ENCODE measurements at regions of chr2 and their contacts with region 1.

Region 1: GRCh38 chr2:231780909-231781797 is at the start of gene PDE6D:
- DNase-seq: peak; percentile 91 to 97 (median 95)
- ATAC-seq: peak; percentile 89
- H3K4me3 ChIP-seq: peak within 1 kb of the TSS; percentile 90
- H3K4me3 Mint-ChIP-seq: peak within 1 kb of the TSS; percentile 94
- H3K27ac ChIP-seq: peak within 1 kb of the TSS; percentile 71 to 78
- H3K27ac Mint-ChIP-seq: peak within 1 kb of the TSS; percentile 94
- H3K4me1 ChIP-seq: peaks cover 36% of the 10 kb centered on the region
- H3K4me1 Mint-ChIP-seq: peaks cover 71% of the 10 kb centered on the region
- H3K27me3 ChIP-seq: no peaks in the 10 kb centered on the region
- H3K27me3 Mint-ChIP-seq: no peaks in the 10 kb centered on the region
- CTCF ChIP-seq: no peak
- total RNA-seq, gene PDE6D: 5.9 to 7.0 TPM

Region 2: DNA sequence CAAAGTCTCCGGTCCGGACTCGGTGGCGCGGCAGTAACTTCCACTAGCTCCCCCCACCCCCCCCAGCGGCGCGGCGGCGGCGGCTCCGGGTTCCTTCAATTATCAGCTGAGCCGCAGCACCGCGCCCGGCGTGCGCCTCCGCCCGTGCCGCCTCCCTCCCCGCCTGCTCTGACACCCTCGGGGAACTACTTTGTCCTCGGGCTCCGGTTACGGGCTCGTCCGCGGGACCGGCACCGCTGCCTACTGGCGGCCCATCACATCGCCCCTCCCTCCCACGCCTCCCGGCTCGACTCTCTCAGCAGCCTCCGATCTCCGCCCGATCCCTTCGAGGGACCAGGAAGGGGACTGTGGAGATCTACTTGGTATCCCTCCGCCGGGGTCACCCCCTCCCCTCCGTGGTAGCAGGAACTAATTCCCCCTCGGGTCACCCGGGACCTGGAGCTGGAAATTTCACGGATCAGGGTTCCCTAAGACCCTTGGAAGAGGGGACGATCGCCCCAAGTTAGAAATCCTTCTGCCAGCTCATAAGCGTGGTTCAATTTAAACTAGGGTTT is 1859.2 kb before region 1 on chr2 and contains the start of gene TRIP12:
- CTCF ChIA-PET with region 1: no interaction called
- POLR2A ChIA-PET with region 1: no interaction called
- intact Hi-C with region 1: loop called in 1 of 2 experiments (anchors 10 kb)
- DNase-seq: peak; percentile 77 to 95 (median 86)
- ATAC-seq: peak; percentile 74
- H3K4me3 ChIP-seq: peak within 1 kb of the TSS; percentile 85
- H3K4me3 Mint-ChIP-seq: peak within 1 kb of the TSS; percentile 98
- H3K27ac ChIP-seq: peak within 1 kb of the TSS; percentile 97 to 98
- H3K27ac Mint-ChIP-seq: peak within 1 kb of the TSS; percentile 95
- H3K4me1 ChIP-seq: peaks cover 28% of the 10 kb centered on the region
- H3K4me1 Mint-ChIP-seq: peaks cover 55% of the 10 kb centered on the region
- H3K27me3 ChIP-seq: no peaks in the 10 kb centered on the region
- H3K27me3 Mint-ChIP-seq: peaks cover 5% of the 10 kb centered on the region
- CTCF ChIP-seq: no peak
- total RNA-seq, gene TRIP12: 151 to 178 TPM

Region 3: GRCh38 chr2:231514103-231514950 is 266.8 kb before region 1 on chr2:
- CTCF ChIA-PET with region 1: no interaction called
- POLR2A ChIA-PET with region 1: no interaction called
- intact Hi-C with region 1: loop called in 1 of 2 experiments (anchors 2 kb)
- DNase-seq: peak; percentile 96 to 99 (median 98)
- ATAC-seq: peak; percentile 96
- H3K4me3 ChIP-seq: peak overlapping the region; percentile 78
- H3K4me3 Mint-ChIP-seq: peak overlapping the region; percentile 91
- H3K27ac ChIP-seq: peak overlapping the region; percentile 87 to 95
- H3K27ac Mint-ChIP-seq: peak overlapping the region; percentile 94
- H3K4me1 ChIP-seq: peaks cover 12% of the 10 kb centered on the region
- H3K4me1 Mint-ChIP-seq: peaks cover 24% of the 10 kb centered on the region
- H3K27me3 ChIP-seq: no peaks in the 10 kb centered on the region
- H3K27me3 Mint-ChIP-seq: no peaks in the 10 kb centered on the region
- CTCF ChIP-seq: no peak

Region 4: DNA sequence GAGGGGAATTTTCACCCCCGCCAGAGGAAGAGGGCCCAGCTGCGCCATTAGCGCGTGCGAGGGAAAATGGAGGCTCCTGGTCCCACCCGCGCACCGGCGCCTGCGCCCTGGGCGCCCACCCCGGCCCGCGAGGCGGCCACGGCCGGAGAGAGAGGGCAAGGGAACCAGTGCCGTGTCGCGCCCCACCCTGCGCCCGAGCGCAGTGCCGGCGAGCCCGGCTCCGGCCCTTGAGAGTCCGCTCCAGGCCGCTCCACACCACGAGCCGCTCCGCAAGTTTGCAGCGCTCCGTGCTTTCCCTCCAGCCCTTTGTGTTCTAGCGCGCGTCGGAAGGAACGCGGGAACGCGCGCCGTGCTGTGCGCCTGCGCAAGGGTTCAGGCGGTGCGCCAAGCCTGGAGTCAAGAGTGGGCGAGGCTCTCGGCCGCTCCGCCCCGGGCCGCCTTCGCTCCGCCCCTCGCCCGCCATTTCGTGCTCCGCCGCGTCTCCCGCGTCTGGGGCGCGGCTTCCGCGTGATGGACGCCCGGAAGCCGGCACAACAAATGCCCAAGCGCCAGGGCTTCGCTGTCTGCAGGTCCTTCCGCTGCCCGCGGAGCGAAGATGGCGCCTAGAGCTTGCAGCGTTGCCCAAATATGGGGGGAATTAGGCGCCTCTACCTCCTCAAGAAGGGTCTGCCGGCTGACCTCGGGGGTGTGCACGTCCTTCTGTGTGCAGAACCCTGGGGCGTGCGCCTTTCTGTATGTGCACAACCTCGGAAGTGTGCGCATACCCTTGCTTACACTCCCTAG is 118.9 kb before region 1 on chr2:
- CTCF ChIA-PET with region 1: no interaction called
- POLR2A ChIA-PET with region 1: interaction called, 4 read pairs
- intact Hi-C with region 1: loop called (anchors 2 to 5 kb)
- DNase-seq: peak; percentile 92 to 99 (median 97)
- ATAC-seq: peak; percentile 89
- H3K4me3 ChIP-seq: peak overlapping the region; percentile 57
- H3K4me3 Mint-ChIP-seq: peak overlapping the region; percentile 73
- H3K27ac ChIP-seq: peak overlapping the region; percentile 80 to 96
- H3K27ac Mint-ChIP-seq: peak overlapping the region; percentile 94
- H3K4me1 ChIP-seq: peaks cover 35% of the 10 kb centered on the region
- H3K4me1 Mint-ChIP-seq: peaks cover 17% of the 10 kb centered on the region
- H3K27me3 ChIP-seq: no peaks in the 10 kb centered on the region
- H3K27me3 Mint-ChIP-seq: no peaks in the 10 kb centered on the region
- CTCF ChIP-seq: no peak

Region 5: DNA sequence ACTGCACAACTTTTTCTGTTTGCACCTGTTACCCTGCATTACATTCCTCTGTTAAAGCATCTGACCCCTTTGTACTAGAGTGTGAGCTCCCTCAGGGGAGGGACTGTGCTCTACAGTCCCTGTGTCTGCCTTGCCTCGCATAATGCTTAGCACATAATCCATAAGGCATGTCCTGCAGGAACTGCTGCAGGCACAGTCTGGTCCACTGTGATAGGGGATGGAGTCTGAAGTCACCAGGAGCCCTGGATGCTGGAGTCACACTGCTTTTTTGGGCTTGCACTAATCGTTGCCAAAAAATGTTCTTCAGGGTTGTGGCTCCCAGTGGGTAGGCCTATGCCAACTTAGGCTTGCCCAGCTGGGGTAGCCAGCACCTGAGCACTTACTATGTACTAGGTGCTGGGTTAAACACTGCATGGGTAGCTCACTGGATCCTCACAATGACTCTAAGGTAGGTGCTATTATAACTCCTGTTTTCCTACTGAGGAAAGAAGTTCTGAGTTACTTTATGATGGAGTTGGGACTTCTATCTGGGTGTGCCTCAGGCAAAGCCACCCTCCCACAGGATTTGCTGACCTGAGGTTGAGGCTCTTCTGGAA is 38.4 kb after region 1 on chr2:
- CTCF ChIA-PET with region 1: no interaction called
- POLR2A ChIA-PET with region 1: no interaction called
- intact Hi-C with region 1: no loop called
- DNase-seq: no peak
- ATAC-seq: no peak
- H3K4me3 ChIP-seq: no peak overlapping the region
- H3K4me3 Mint-ChIP-seq: no peak overlapping the region
- H3K27ac ChIP-seq: no peak overlapping the region
- H3K27ac Mint-ChIP-seq: no peak overlapping the region
- H3K4me1 ChIP-seq: no peaks in the 10 kb centered on the region
- H3K4me1 Mint-ChIP-seq: no peaks in the 10 kb centered on the region
- H3K27me3 ChIP-seq: no peaks in the 10 kb centered on the region
- H3K27me3 Mint-ChIP-seq: peaks cover 10% of the 10 kb centered on the region
- CTCF ChIP-seq: no peak

Region 6: DNA sequence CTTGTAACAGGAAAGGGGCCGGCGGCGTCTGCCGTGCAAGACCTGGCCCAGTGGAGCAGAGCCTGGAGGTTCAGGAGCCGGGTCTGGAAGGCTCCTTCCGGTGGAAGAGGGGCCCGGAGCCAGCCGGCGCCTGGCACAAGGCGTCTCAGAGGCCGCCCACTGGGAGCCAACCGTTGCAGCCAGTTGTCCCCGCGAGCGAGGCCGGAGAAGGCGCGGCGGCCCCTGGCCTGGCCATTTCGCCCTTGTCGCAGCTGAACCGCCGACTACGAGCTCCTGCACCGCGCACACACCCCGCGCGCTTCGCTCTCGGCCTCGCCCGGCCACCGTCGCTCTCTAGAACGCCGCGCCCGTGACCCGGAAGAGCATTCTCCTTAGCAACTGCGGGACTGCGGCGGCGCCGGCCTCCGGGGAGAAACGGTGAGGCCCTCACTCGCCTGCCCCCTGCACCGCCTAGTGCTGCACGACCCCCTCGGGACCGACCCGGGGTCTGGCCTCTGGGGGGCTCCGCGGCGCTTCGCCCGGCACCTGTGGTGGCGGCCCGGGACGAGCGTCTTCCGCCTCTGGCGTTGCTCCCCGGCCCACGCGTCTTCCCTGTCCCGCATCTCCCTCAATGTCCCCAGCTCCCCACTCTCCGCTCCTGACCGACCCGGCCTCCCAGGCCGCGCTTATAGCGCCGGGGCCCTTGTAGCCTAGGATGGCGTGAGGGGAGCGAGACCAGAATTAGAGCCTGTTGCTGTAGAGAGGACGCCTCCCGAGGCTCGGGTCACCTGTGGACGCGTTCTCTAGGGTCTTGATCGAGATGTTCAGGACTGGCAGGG is 180.4 kb after region 1 on chr2 and contains the start of gene DIS3L2:
- CTCF ChIA-PET with region 1: no interaction called
- POLR2A ChIA-PET with region 1: interaction called, 3 read pairs
- intact Hi-C with region 1: loop called in 1 of 2 experiments (anchors 5 kb)
- DNase-seq: peak; percentile 66 to 90 (median 74)
- ATAC-seq: peak; percentile 93
- H3K4me3 ChIP-seq: peak within 1 kb of the TSS; percentile 96
- H3K4me3 Mint-ChIP-seq: peak within 1 kb of the TSS; percentile 97
- H3K27ac ChIP-seq: peak within 1 kb of the TSS; percentile 45 to 69
- H3K27ac Mint-ChIP-seq: peak within 1 kb of the TSS; percentile 87
- H3K4me1 ChIP-seq: peaks cover 28% of the 10 kb centered on the region
- H3K4me1 Mint-ChIP-seq: peaks cover 47% of the 10 kb centered on the region
- H3K27me3 ChIP-seq: no peaks in the 10 kb centered on the region
- H3K27me3 Mint-ChIP-seq: no peaks in the 10 kb centered on the region
- CTCF ChIP-seq: no peak
- total RNA-seq, gene DIS3L2: 59.8 to 62.9 TPM

Region 7: GRCh38 chr2:233430081-233430480 is 1648.9 kb after region 1 on chr2:
- CTCF ChIA-PET with region 1: no interaction called
- POLR2A ChIA-PET with region 1: no interaction called
- intact Hi-C with region 1: loop called in 1 of 2 experiments (anchors 5 kb)
- DNase-seq: no peak
- ATAC-seq: no peak
- H3K4me3 ChIP-seq: no peak overlapping the region
- H3K4me3 Mint-ChIP-seq: no peak overlapping the region
- H3K27ac ChIP-seq: no peak overlapping the region
- H3K27ac Mint-ChIP-seq: peak overlapping the region; percentile 71
- H3K4me1 ChIP-seq: peaks cover 36% of the 10 kb centered on the region
- H3K4me1 Mint-ChIP-seq: peaks cover 79% of the 10 kb centered on the region
- H3K27me3 ChIP-seq: no peaks in the 10 kb centered on the region
- H3K27me3 Mint-ChIP-seq: no peaks in the 10 kb centered on the region
- CTCF ChIP-seq: no peak